GM10248 (cell line): ENCODE measurements at regions of chr14 and their contacts with region 1.

Region 1: DNA sequence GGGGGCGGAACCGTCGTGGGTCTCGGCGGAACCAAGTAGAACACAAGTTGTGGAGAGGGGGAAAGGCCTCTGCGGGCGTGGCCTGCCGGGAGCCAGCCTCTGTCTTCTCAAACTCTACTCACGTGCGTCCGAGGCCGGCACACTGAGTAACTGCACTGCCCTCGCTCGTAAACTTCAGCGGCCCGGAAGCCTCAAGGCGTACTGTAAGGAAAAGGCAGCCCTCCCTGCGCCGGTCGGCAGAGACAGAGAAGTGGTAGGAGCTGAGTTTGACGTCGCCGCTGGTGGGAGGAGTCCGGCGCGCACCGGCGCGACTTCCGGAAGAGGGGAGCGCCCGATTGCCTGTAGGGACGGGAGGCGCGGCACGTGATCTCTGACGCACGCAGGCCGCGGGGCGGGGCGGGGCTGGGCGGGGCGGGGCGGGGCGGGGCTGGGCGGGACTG is at the start of gene FBXO33:
- DNase-seq: peak; percentile 96
- CTCF ChIP-seq: no peak

Region 2: GRCh38 chr14:39446131-39446744 is 14.0 kb after region 1 on chr14:
- CTCF ChIA-PET with region 1: interaction called, 40 read pairs
- POLR2A ChIA-PET with region 1: interaction called, 8 read pairs
- DNase-seq: no peak
- CTCF ChIP-seq: no peak

Region 3: DNA sequence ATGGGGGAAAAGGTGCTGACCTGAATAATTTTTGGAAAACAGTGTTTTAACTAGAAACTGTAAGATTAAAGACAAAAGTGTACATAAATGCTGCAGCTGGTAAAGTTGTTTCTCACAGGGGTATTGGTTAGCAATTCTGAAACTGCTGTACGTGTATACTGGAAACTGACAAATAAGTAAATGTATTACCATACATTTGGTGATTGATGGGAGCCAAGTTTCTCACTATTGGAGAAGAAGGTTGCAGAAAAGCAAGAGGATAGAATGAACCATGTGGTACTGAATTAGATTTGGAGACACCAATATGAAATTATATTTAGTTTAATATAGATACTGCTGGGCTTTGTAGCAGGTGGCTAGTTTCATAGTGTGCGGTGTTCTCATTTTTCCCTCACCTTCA is 19.6 kb after region 1 on chr14:
- CTCF ChIA-PET with region 1: interaction called, 40 read pairs
- POLR2A ChIA-PET with region 1: interaction called, 8 read pairs
- DNase-seq: no peak
- CTCF ChIP-seq: no peak